Naive thymus-derived CD4-positive, alpha-beta T cell (primary cell): ENCODE measurements at regions of chr15 and their contacts with region 1.

Region 1: GRCh38 chr15:63188926-63189871 is at the start of gene RAB8B:
- DNase-seq: peak; percentile 85 to 98 (median 93)
- ATAC-seq: peak; percentile 88
- H3K4me3 ChIP-seq: peak within 1 kb of the TSS; percentile 86
- H3K4me3 Mint-ChIP-seq: peak within 1 kb of the TSS; percentile 92 to 99 (median 97)
- H3K27ac ChIP-seq: peak within 1 kb of the TSS; percentile 99
- H3K27ac Mint-ChIP-seq: peak within 1 kb of the TSS; percentile 84 to 98 (median 95)
- H3K4me1 ChIP-seq: peaks cover 22 to 40% of the 10 kb centered on the region in 2 donors
- H3K4me1 Mint-ChIP-seq: peaks cover 41 to 54% (median 50%) of the 10 kb centered on the region in 7 donors
- H3K27me3 ChIP-seq: no peaks in the 10 kb centered on the region
- H3K27me3 Mint-ChIP-seq: peaks cover 0 to 3% (median 0%) of the 10 kb centered on the region in 5 donors
- total RNA-seq, gene RAB8B: 37.2 to 100 (median 71.3) TPM

Region 2: DNA sequence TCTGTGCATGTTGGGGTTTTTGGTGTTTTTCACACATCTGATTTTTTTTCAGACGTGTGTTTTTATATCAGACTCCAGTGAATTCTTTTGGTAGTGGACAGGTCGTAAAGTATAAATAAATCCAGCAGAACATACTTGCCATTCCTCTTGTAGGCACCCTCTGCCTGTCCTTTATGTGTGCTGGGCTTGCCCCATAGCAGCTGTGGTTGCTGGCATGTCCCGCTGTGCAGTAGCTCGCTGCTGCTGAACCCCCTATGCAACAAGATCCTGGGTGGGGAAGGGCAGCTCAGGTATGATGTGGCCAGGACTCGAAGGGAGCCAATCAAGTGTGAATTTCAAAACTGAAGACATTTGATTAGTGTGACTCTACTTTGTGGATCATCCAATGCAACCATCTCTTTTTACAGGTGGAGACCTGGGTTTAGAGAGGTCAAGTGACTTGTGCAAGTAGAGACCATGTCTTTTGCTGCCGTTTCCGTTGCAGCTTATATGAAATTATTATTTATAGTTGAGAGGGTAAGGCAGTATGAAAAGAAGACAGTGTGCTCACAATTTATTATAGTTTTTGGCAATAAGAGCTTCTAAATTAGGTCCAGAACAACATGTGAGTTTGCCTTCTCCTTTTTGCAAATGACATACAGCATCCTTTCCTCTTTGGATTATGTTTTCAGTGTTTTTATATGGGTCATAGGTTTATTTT is 673.4 kb before region 1 on chr15:
- CTCF ChIA-PET with region 1: no interaction called
- POLR2A ChIA-PET with region 1: no interaction called
- intact Hi-C with region 1: no loop called
- DNase-seq: no peak
- ATAC-seq: no peak
- H3K4me3 ChIP-seq: no peak overlapping the region
- H3K4me3 Mint-ChIP-seq: no peak overlapping the region
- H3K27ac ChIP-seq: no peak overlapping the region
- H3K27ac Mint-ChIP-seq: no peak overlapping the region
- H3K4me1 ChIP-seq: no peaks in the 10 kb centered on the region
- H3K4me1 Mint-ChIP-seq: no peaks in the 10 kb centered on the region
- H3K27me3 ChIP-seq: no peaks in the 10 kb centered on the region
- H3K27me3 Mint-ChIP-seq: peaks cover 19 to 48% (median 43%) of the 10 kb centered on the region in 5 donors

Region 3: DNA sequence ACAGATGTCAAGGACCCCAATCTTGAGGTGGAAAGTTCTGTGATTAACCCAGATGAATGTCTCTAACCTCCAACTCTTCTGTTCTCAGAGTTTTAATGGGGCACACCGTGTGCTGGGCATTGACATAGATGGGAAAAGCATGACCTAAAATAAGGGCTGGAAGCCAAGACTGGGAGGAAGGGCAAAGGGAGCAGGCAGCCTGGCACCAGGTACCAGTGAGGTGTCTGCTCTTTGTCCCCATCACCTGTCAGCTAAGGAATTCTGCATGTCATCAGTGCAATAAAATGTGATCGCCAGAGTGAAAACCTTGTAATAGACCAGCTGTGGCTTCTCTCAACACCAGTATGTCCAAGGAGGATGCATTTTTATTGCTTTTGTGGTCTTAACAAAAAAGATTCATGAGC is 290.1 kb before region 1 on chr15:
- CTCF ChIA-PET with region 1: no interaction called
- POLR2A ChIA-PET with region 1: no interaction called
- intact Hi-C with region 1: no loop called
- DNase-seq: no peak
- ATAC-seq: no peak
- H3K4me3 ChIP-seq: no peak overlapping the region
- H3K4me3 Mint-ChIP-seq: no peak overlapping the region
- H3K27ac ChIP-seq: no peak overlapping the region
- H3K27ac Mint-ChIP-seq: no peak overlapping the region
- H3K4me1 ChIP-seq: no peaks in the 10 kb centered on the region
- H3K4me1 Mint-ChIP-seq: no peaks in the 10 kb centered on the region
- H3K27me3 ChIP-seq: no peaks in the 10 kb centered on the region
- H3K27me3 Mint-ChIP-seq: peaks cover 0 to 11% (median 4%) of the 10 kb centered on the region in 5 donors

Region 4: GRCh38 chr15:63048115-63048775 is 141.0 kb before region 1 on chr15:
- CTCF ChIA-PET with region 1: no interaction called
- POLR2A ChIA-PET with region 1: interaction called, 4 read pairs
- intact Hi-C with region 1: loop called in 1 of 2 experiments (anchors 1 kb)
- DNase-seq: peak; percentile 72 to 90 (median 85)
- ATAC-seq: peak; percentile 92
- H3K4me3 ChIP-seq: peak overlapping the region; percentile 76
- H3K4me3 Mint-ChIP-seq: peak overlapping the region; percentile 84 to 97 (median 94)
- H3K27ac ChIP-seq: peak overlapping the region; percentile 59
- H3K27ac Mint-ChIP-seq: peak overlapping the region; percentile 25 to 85 (median 68)
- H3K4me1 ChIP-seq: peaks cover 7 to 16% of the 10 kb centered on the region in 2 donors
- H3K4me1 Mint-ChIP-seq: peaks cover 13 to 42% (median 26%) of the 10 kb centered on the region in 7 donors
- H3K27me3 ChIP-seq: peaks cover 17 to 27% of the 10 kb centered on the region in 2 donors
- H3K27me3 Mint-ChIP-seq: peaks cover 30 to 60% (median 36%) of the 10 kb centered on the region in 5 donors

Region 5: DNA sequence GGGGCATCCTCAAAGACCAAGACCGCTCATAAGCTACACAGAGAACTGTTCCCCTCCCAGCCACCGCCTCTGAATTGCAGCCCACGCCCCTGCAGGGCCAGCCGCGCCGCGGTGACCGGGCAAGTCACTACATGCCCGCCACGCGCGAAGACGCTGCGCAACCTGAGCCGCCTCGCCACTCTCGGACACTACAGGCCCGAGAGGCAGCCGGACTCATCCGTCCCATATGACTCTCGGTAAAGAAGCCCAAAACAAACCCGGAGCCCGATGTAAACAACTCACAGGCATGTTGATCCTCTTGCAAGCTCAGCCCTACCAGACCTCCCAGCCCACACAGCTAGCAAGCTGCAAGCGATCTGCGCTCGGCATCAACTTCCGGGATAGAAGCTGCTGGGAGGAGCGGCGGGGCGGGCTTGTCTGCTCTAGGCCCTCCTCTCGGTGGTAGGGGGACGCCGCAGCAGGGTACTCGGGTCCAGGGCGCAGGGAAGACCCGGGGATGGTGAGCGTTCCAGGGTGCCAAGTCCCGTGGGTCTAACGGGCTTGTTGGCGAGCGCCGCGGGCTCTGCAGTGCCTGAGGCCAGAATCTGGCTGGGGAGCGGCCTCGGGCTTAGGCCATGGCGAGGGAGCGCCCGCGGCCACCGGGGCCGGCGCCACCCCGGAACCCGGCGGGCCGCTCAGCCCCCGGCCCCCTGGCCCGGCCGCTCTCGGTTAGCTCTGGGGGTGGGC is 31.9 kb before region 1 on chr15 and contains the start of gene RPS27L:
- CTCF ChIA-PET with region 1: interaction called, 4 read pairs
- POLR2A ChIA-PET with region 1: interaction called, 49 read pairs
- intact Hi-C with region 1: loop called (anchors 1 kb)
- DNase-seq: peak; percentile 72 to 89 (median 84)
- ATAC-seq: peak; percentile 97
- H3K4me3 ChIP-seq: peak within 1 kb of the TSS; percentile 100
- H3K4me3 Mint-ChIP-seq: peak within 1 kb of the TSS; percentile 89 to 100 (median 98)
- H3K27ac ChIP-seq: peak within 1 kb of the TSS; percentile 86
- H3K27ac Mint-ChIP-seq: peak within 1 kb of the TSS; percentile 93 to 99 (median 97)
- H3K4me1 ChIP-seq: peaks cover 10 to 11% of the 10 kb centered on the region in 2 donors
- H3K4me1 Mint-ChIP-seq: peaks cover 4 to 37% (median 25%) of the 10 kb centered on the region in 7 donors
- H3K27me3 ChIP-seq: no peaks in the 10 kb centered on the region
- H3K27me3 Mint-ChIP-seq: no peaks in the 10 kb centered on the region
- total RNA-seq, gene RPS27L: 38.7 to 248 (median 111) TPM

Region 6: GRCh38 chr15:63172376-63173109 is 16.7 kb before region 1 on chr15:
- CTCF ChIA-PET with region 1: interaction called, 3 read pairs
- POLR2A ChIA-PET with region 1: interaction called, 10 read pairs
- intact Hi-C with region 1: no loop called
- DNase-seq: no peak
- ATAC-seq: no peak
- H3K4me3 ChIP-seq: no peak overlapping the region
- H3K4me3 Mint-ChIP-seq: no peak overlapping the region
- H3K27ac ChIP-seq: no peak overlapping the region
- H3K27ac Mint-ChIP-seq: peak overlapping the region in 1 of 9 donors; percentile 27
- H3K4me1 ChIP-seq: no peaks in the 10 kb centered on the region
- H3K4me1 Mint-ChIP-seq: peaks cover 0 to 2% (median 0%) of the 10 kb centered on the region in 7 donors
- H3K27me3 ChIP-seq: no peaks in the 10 kb centered on the region
- H3K27me3 Mint-ChIP-seq: no peaks in the 10 kb centered on the region

Region 7: DNA sequence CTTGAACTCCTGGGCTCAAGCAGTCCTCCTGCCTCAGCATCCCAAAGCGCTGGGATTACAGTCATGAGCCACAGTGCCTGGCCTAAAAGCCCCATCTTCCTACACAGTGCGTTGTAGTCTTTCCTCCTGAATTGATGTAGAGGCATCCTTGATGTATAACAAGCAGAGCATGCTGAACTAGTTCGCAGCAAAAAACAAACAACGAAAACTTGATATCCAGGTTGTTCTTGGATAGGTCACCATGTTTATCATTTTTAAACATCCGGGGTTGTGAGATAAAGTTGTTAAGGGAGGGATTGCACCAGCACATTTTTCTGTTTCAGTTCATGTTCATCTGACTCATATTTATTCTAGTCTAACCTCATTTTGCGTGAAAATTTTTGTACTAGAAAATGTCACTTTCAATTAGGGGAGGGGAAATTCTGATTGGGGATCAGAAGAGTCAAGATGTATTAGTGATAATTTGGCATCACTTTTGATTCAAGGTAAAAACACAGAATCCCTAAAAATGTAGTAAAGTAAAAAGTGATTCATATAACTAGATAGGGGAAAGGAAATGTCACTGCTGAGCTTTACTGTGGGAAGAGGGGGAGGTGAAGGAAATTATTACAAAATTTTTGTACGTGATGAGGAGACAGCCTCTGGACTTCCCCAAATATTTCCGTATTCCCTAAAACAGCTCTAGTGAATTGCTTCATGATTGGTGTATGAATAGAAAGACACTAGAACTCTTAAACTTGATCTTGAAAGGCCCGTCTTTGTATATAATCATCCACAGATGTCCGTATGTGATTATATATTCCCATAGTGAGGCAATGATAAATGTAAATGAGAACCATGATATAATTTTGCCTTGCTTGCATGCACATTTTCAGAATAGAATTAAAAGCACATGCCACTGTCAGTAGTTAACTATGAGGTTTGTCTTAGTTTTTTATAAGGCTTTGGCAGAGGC is 23.1 kb after region 1 on chr15:
- CTCF ChIA-PET with region 1: interaction called, 4 read pairs
- POLR2A ChIA-PET with region 1: interaction called, 17 read pairs
- intact Hi-C with region 1: loop called (anchors 1 kb)
- DNase-seq: no peak
- ATAC-seq: peak; percentile 60
- H3K4me3 ChIP-seq: no peak overlapping the region
- H3K4me3 Mint-ChIP-seq: peak overlapping the region in 9 of 10 donors; percentile 22 to 78 (median 58)
- H3K27ac ChIP-seq: no peak overlapping the region
- H3K27ac Mint-ChIP-seq: peak overlapping the region; percentile 0 to 91 (median 77)
- H3K4me1 ChIP-seq: peaks cover 46 to 52% of the 10 kb centered on the region in 2 donors
- H3K4me1 Mint-ChIP-seq: peaks cover 59 to 92% (median 82%) of the 10 kb centered on the region in 7 donors
- H3K27me3 ChIP-seq: no peaks in the 10 kb centered on the region
- H3K27me3 Mint-ChIP-seq: no peaks in the 10 kb centered on the region

Region 8: DNA sequence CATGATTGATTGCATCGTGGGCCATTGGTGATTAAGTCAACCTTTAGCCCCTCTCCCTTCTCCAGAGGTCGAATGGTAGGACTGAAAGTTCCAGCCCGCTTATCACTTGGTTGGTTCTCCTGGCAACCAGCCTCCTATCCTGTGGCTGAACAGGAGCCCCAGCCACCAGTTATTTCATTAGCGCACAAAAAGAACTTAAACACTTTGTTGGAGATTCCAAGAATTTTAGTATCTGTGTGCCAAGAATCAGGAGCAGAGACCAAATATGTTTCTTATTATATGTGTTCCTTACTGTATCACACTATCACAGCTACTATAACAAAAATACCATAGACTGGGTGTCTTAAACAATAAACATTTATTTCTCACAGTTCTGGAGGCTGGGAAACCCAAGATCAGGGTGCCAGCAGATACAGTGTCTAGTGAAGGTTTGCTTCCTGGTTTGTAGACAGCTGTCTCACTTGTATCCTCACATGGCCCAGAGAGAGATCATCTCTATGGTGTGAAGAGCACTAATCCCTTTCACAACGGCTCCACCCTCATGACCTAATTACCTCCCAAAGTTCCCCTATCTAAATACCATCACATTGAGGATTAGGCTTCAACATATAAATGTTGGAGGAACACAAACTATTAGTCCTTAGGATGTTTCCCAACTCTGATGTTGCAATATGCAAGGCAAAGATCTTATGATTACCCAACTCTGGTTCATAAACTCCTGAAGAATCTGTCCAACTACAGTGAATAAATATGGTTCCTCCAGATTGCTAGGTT is 57.7 kb after region 1 on chr15:
- CTCF ChIA-PET with region 1: interaction called, 5 read pairs
- POLR2A ChIA-PET with region 1: interaction called, 8 read pairs
- intact Hi-C with region 1: loop called in 1 of 2 experiments (anchors 1 kb)
- DNase-seq: no peak
- ATAC-seq: peak; percentile 79
- H3K4me3 ChIP-seq: no peak overlapping the region
- H3K4me3 Mint-ChIP-seq: peak overlapping the region in 1 of 10 donors; percentile 44
- H3K27ac ChIP-seq: no peak overlapping the region
- H3K27ac Mint-ChIP-seq: peak overlapping the region in 4 of 9 donors; percentile 39 to 72 (median 58)
- H3K4me1 ChIP-seq: peaks cover 8 to 10% of the 10 kb centered on the region in 2 donors
- H3K4me1 Mint-ChIP-seq: peaks cover 18 to 75% (median 54%) of the 10 kb centered on the region in 7 donors
- H3K27me3 ChIP-seq: no peaks in the 10 kb centered on the region
- H3K27me3 Mint-ChIP-seq: no peaks in the 10 kb centered on the region

Region 9: DNA sequence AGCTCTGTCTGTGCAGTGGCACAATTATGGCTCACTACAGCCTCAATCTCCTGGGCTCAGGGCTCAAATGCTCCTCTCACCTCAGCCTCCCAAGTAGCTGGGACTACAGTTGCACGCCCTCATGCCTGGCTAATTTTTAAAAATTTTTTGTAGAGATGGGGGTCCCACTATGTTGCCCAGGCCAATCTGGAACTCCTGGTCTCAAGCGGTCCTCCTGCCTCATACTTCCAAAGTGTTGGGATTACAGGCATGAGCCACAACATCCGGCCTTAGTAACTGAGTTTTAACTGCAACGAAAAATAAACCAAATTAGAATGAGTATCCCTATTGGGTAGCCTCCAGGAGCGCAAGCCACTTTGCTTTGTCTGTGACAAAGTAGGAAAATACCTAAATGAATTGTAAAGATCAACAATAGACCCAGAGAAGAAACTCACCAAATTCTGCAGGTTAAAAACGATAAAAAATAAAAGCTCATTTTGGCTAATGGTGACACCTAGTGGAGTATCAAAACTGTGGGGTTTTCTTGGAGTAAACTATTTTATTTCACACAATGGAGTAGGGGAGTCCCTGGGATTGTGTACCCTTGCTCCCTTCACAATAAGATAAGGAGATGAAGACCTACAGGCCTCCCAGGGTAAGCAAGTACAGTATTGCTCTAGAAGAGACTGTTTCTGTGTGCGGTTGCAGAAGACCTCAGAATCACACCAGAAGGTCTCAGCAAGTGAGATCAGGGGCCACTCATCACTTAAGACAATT is 213.5 kb after region 1 on chr15:
- CTCF ChIA-PET with region 1: no interaction called
- POLR2A ChIA-PET with region 1: no interaction called
- intact Hi-C with region 1: loop called in 1 of 2 experiments (anchors 1 kb)
- DNase-seq: peak in 6 of 9 donors; percentile 7 to 60 (median 50)
- ATAC-seq: peak; percentile 67
- H3K4me3 ChIP-seq: no peak overlapping the region
- H3K4me3 Mint-ChIP-seq: no peak overlapping the region
- H3K27ac ChIP-seq: no peak overlapping the region
- H3K27ac Mint-ChIP-seq: no peak overlapping the region
- H3K4me1 ChIP-seq: peaks cover 0 to 3% of the 10 kb centered on the region in 2 donors
- H3K4me1 Mint-ChIP-seq: peaks cover 0 to 19% (median 0%) of the 10 kb centered on the region in 7 donors
- H3K27me3 ChIP-seq: no peaks in the 10 kb centered on the region
- H3K27me3 Mint-ChIP-seq: peaks cover 0 to 6% (median 4%) of the 10 kb centered on the region in 5 donors